MCF 10A (cell line): ENCODE measurements at regions of chr6 and their contacts with region 1.

Region 1: GRCh38 chr6:134619789-134620188 is 301.9 kb upstream of the SGK1 start:
- DNase-seq: peak; percentile 53
- H3K4me3 Mint-ChIP-seq: no peak overlapping the region
- H3K27ac Mint-ChIP-seq: peak overlapping the region; percentile 57
- H3K4me1 Mint-ChIP-seq: peaks cover 52% of the 10 kb centered on the region
- H3K27me3 Mint-ChIP-seq: no peaks in the 10 kb centered on the region
- CTCF ChIP-seq: no peak

Region 2: DNA sequence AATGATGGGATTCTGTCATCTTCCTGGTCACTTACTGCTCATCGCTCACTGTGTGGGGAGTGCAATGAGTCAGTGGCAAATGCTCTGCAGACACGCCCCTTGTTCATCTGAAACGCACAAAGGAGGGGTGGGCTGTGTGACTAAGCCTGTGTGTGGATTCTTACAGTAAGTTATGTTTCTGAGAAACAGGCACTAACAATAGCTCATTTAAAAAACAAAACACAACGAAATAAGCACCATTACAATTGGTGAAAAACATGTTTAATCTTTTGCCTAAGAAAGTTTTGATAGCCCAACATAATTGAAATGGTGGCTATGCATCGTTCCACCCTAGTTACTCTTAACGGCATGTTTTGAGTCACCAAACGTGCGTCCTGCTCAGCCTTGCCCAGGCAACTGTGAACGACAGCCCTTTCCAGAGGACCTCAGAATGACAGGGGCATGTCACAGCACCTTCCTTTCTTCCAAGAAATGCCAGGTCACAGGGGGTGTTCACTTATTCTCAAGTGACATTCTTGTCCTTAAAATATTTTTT is 183.4 kb before region 1 on chr6:
- CTCF ChIA-PET with region 1: no interaction called
- POLR2A ChIA-PET with region 1: interaction called, 25 read pairs
- intact Hi-C with region 1: no loop called
- DNase-seq: peak; percentile 94
- H3K4me3 Mint-ChIP-seq: peak overlapping the region; percentile 43
- H3K27ac Mint-ChIP-seq: peak overlapping the region; percentile 88
- H3K4me1 Mint-ChIP-seq: peaks cover 24% of the 10 kb centered on the region
- H3K27me3 Mint-ChIP-seq: no peaks in the 10 kb centered on the region
- CTCF ChIP-seq: no peak

Region 3: DNA sequence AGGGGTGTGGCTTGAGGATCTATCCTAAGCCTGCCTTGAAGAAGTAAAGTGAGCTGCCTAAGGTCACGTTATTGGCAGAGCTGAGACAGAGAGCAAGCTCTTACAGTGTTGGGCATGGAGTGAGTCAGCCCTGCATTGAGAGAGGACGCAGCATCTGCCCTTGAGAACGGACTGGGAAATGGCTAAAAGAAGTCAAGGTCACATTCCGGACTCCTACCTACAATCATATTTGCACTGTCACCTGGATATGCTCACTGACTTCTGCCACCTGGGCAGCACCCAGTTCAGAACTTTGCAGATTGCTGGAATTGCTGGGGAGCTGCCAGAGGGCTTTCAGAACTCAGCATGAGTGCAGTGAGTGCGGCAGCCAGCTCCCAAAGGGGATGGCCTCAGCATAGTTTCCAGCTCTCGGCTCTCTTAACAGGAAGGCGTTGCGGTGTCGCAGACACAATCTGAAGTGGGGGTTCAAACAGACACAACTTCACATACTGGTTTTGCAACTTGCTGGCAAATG is 102.6 kb before region 1 on chr6:
- CTCF ChIA-PET with region 1: interaction called, 4 read pairs
- POLR2A ChIA-PET with region 1: interaction called, 52 read pairs
- intact Hi-C with region 1: no loop called
- DNase-seq: peak; percentile 95
- H3K4me3 Mint-ChIP-seq: peak overlapping the region; percentile 53
- H3K27ac Mint-ChIP-seq: peak overlapping the region; percentile 73
- H3K4me1 Mint-ChIP-seq: peaks cover 41% of the 10 kb centered on the region
- H3K27me3 Mint-ChIP-seq: no peaks in the 10 kb centered on the region
- CTCF ChIP-seq: no peak

Region 4: DNA sequence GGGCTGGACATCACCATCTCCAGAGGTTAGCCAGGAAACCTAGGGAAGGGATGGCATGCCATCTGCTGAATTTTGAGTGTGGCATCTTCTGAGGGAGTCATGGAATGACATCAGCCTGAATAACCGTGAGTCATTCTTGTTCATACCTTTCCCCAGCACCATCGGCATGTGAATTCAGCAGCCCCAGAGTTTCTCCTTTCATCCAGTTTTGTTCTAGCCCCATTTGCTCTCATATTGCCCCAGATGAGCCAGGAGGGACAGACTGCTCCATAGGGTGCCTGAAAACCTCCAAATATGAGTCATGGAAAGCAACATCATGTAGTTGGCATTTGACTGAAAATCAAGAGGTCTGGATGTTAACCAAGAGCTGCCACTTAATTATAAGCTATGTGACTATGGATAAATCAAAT is 82.6 kb before region 1 on chr6:
- CTCF ChIA-PET with region 1: interaction called, 3 read pairs
- POLR2A ChIA-PET with region 1: interaction called, 12 read pairs
- intact Hi-C with region 1: no loop called
- DNase-seq: peak; percentile 98
- H3K4me3 Mint-ChIP-seq: no peak overlapping the region
- H3K27ac Mint-ChIP-seq: peak overlapping the region; percentile 65
- H3K4me1 Mint-ChIP-seq: peaks cover 32% of the 10 kb centered on the region
- H3K27me3 Mint-ChIP-seq: no peaks in the 10 kb centered on the region
- CTCF ChIP-seq: no peak

Region 5: DNA sequence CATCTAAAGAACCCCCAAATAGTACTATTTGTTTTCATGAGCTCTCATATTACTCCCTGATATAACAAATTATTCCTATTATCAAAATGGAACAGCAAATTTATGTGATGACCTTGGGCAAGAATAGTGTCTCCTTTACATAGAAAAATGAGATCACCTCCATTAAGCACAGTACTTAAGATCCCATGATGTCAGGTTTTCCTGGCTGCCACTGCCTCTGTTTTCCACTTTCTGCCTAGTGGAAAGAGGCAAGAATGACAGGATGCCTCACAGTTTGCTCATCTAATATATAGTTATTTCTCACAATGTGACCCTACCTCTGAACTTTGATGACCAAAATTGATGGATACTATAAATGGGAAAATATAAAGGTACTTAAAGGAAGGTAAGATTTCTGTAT is 41.8 kb before region 1 on chr6:
- CTCF ChIA-PET with region 1: no interaction called
- POLR2A ChIA-PET with region 1: no interaction called
- intact Hi-C with region 1: no loop called
- DNase-seq: no peak
- H3K4me3 Mint-ChIP-seq: no peak overlapping the region
- H3K27ac Mint-ChIP-seq: no peak overlapping the region
- H3K4me1 Mint-ChIP-seq: no peaks in the 10 kb centered on the region
- H3K27me3 Mint-ChIP-seq: no peaks in the 10 kb centered on the region
- CTCF ChIP-seq: no peak

Region 6: DNA sequence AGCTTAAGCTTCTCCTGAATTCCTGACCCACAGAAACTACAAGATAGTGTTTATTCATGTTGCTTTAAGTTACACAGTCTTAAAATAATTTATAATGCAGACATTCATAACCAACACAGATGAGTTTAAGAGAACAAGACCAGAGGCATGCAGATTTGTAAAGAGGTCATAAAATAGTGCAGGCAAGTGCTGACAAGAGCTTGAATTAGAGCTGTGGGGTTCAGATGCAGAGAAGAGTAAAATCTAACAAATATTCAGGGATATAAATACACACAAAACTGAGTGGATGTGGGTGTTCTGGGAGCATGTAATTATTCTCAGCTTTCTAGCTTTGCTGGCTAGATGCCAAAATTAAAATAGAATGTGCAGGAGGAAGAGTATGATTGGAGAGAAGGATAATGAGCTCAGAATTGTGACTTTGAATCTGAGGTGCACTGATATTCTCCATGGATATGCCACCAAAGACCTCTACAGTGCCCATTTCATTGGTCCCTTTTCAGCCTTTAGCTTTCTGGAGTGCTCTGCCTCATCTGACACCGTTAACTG is 10.0 kb before region 1 on chr6:
- CTCF ChIA-PET with region 1: interaction called, 12 read pairs
- POLR2A ChIA-PET with region 1: interaction called, 31 read pairs
- intact Hi-C with region 1: no loop called
- DNase-seq: no peak
- H3K4me3 Mint-ChIP-seq: no peak overlapping the region
- H3K27ac Mint-ChIP-seq: no peak overlapping the region
- H3K4me1 Mint-ChIP-seq: peaks cover 2% of the 10 kb centered on the region
- H3K27me3 Mint-ChIP-seq: no peaks in the 10 kb centered on the region
- CTCF ChIP-seq: no peak

Region 7: DNA sequence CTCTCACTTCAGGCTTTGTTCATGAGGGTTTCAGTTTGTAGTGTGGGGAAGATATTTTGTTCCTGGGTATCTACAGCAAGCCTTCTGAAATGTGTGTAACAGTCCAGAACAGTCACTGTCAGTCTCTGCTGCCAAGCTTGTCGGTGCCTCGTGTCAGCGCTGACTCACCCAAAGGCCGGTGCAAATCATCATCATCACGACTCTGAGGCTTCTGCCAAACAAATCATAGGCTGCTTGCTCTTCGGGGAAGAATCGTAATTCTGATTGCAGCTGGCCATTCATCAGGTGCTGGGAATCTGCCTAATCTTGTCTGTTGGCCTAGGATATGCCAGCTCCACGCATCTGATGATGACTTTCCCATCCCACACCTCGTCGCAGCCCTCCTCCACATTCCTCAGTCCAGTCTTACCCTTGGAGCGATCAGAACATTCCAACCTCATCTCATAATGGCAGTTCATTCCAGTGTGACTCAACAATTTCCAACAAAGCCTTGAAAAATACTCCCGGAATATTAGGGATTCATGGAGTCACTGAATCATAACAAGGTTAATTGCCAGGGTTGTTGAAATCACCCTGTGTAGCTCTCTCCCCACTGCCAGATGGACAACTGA is 289.2 kb after region 1 on chr6:
- CTCF ChIA-PET with region 1: no interaction called
- POLR2A ChIA-PET with region 1: interaction called, 10 read pairs
- intact Hi-C with region 1: no loop called
- DNase-seq: peak; percentile 98
- H3K4me3 Mint-ChIP-seq: peak overlapping the region; percentile 28
- H3K27ac Mint-ChIP-seq: peak overlapping the region; percentile 81
- H3K4me1 Mint-ChIP-seq: peaks cover 31% of the 10 kb centered on the region
- H3K27me3 Mint-ChIP-seq: no peaks in the 10 kb centered on the region
- CTCF ChIP-seq: no peak

Region 8: GRCh38 chr6:136334853-136335252 is 1715.1 kb after region 1 on chr6:
- CTCF ChIA-PET with region 1: no interaction called
- POLR2A ChIA-PET with region 1: no interaction called
- intact Hi-C with region 1: no loop called
- DNase-seq: no peak
- H3K4me3 Mint-ChIP-seq: no peak overlapping the region
- H3K27ac Mint-ChIP-seq: no peak overlapping the region
- H3K4me1 Mint-ChIP-seq: no peaks in the 10 kb centered on the region
- H3K27me3 Mint-ChIP-seq: no peaks in the 10 kb centered on the region
- CTCF ChIP-seq: no peak